PC-9 (cell line): ENCODE measurements at regions of chr11 and their contacts with region 1.

Region 1: GRCh38 chr11:98740321-98740720 is 280.4 kb upstream of the CNTN5 start:
- DNase-seq: no peak
- H3K4me3 ChIP-seq: no peak overlapping the region
- H3K27ac ChIP-seq: no peak overlapping the region
- H3K4me1 ChIP-seq: no peaks in the 10 kb centered on the region
- H3K27me3 ChIP-seq: no peaks in the 10 kb centered on the region
- CTCF ChIP-seq: no peak

Region 2: GRCh38 chr11:98703779-98704556 is 36.4 kb before region 1 on chr11:
- CTCF ChIA-PET with region 1: no interaction called
- POLR2A ChIA-PET with region 1: no interaction called
- intact Hi-C with region 1: loop called (anchors 1 kb)
- DNase-seq: no peak
- H3K4me3 ChIP-seq: no peak overlapping the region
- H3K27ac ChIP-seq: no peak overlapping the region
- H3K4me1 ChIP-seq: no peaks in the 10 kb centered on the region
- H3K27me3 ChIP-seq: no peaks in the 10 kb centered on the region
- CTCF ChIP-seq: no peak